CD4-positive, alpha-beta memory T cell (primary cell): ENCODE measurements at regions of chr16 and their contacts with region 1.

Region 1: GRCh38 chr16:78099372-78100161 is at the start of gene WWOX:
- DNase-seq: peak; percentile 96 to 98 (median 98)
- H3K4me3 ChIP-seq: peak within 1 kb of the TSS; percentile 78 to 88
- H3K4me3 Mint-ChIP-seq: peak within 1 kb of the TSS; percentile 89 to 96 (median 91)
- H3K27ac ChIP-seq: peak within 1 kb of the TSS; percentile 89
- H3K27ac Mint-ChIP-seq: peak within 1 kb of the TSS; percentile 93 to 98 (median 96)
- H3K4me1 ChIP-seq: peaks cover 16% of the 10 kb centered on the region
- H3K4me1 Mint-ChIP-seq: peaks cover 16 to 44% (median 25%) of the 10 kb centered on the region in 4 donors
- H3K27me3 ChIP-seq: no peaks in the 10 kb centered on the region
- H3K27me3 Mint-ChIP-seq: peaks cover 0 to 7% of the 10 kb centered on the region in 2 donors
- total RNA-seq, gene WWOX: 21.9 to 23.1 TPM

Region 2: DNA sequence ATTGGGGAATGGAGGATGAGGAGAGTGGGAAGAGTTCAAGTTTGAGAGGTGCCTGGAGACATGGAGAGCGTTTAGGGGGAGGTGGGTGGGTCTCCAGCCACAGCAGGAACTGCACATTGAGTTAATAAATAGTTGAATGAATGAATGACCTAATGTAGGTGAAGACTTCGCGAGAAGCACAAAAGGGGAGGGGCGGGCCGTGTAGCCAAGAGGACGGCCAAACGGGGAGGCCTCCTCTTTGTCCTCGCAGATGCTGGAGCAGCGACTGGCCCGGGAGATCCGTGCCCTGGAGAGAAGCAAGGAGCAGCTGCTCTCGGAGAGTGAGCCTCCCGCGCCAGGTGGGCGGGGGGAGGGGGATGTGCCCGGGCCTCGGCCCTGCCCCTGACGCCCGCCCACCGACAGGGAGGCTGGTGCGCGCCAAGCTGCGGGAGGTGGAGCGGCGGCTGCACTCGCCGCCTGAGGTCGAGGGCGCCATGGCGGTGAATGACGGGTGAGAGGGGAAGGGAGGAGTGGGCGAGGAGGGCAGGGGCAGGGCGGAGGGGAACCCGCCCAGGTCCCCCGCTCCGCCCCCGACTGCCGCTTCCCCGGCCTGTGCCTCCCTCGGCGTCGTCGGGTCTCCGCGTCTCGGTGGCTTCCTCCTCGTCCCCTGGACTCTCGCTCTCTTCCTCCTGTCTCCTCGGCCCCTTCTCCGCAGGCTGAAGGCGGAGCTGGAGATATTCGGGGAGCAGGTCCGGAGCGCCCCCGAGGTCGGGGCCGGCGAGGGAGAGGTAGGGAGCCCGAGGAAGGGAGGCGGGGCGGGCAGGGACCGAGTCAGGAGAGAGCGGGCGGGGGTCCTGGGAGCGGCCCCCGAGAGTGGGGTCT is 887.5 kb before region 1 on chr16:
- CTCF ChIA-PET with region 1: no interaction called
- POLR2A ChIA-PET with region 1: no interaction called
- intact Hi-C with region 1: loop called (anchors 1 kb)
- DNase-seq: peak; percentile 71 to 86 (median 74)
- H3K4me3 ChIP-seq: peak overlapping the region; percentile 17 to 66
- H3K4me3 Mint-ChIP-seq: peak overlapping the region; percentile 84 to 92 (median 88)
- H3K27ac ChIP-seq: peak overlapping the region; percentile 61
- H3K27ac Mint-ChIP-seq: peak overlapping the region; percentile 78 to 90 (median 88)
- H3K4me1 ChIP-seq: peaks cover 5% of the 10 kb centered on the region
- H3K4me1 Mint-ChIP-seq: peaks cover 8 to 16% (median 13%) of the 10 kb centered on the region in 4 donors
- H3K27me3 ChIP-seq: no peaks in the 10 kb centered on the region
- H3K27me3 Mint-ChIP-seq: no peaks in the 10 kb centered on the region

Region 3: GRCh38 chr16:77675464-77676324 is 423.9 kb before region 1 on chr16:
- CTCF ChIA-PET with region 1: interaction called, 5 read pairs
- POLR2A ChIA-PET with region 1: no interaction called
- intact Hi-C with region 1: loop called (anchors 1 kb)
- DNase-seq: peak; percentile 48 to 62 (median 60)
- H3K4me3 ChIP-seq: no peak overlapping the region
- H3K4me3 Mint-ChIP-seq: no peak overlapping the region
- H3K27ac ChIP-seq: no peak overlapping the region
- H3K27ac Mint-ChIP-seq: no peak overlapping the region
- H3K4me1 ChIP-seq: no peaks in the 10 kb centered on the region
- H3K4me1 Mint-ChIP-seq: no peaks in the 10 kb centered on the region
- H3K27me3 ChIP-seq: no peaks in the 10 kb centered on the region
- H3K27me3 Mint-ChIP-seq: peaks cover 2 to 5% of the 10 kb centered on the region in 2 donors

Region 4: DNA sequence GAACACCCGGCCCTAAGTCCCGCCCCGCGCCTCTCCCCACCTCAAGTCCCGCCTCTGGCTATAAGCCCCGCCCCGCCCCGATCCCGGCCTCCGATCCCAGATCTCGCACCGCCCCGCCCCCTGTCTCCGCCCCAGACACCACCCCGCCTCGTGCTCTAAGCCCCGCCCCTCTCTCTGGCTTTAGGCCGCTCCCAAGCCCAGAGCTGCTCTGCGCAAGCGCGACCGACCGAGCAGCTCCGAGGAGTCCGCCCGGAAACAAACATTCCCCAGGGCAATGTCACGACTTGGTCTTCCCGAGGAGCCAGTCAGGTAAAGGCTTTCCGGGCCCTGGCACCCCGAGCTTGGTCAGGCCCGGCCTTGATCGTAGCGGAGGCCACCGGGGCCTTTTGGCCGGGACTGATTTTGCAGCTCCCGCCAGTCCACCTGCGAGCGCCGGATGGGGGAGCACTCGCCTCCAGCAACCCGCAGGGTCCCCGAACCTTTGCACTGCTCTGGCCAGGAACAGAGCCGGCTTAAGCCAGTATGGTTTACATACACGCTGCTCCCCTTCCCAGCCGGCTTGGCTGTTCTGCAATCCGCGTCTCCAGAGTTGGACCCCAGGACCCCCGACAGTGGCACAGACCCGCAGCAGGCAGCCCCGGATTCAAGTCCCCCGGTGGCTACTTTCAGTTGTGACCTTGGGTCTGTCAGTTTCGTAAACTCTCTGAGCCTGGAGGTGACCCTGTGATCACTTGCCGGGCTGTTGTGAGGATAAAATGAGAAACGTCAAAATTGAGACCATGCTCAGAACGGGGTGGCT is 377.1 kb before region 1 on chr16 and contains the start of gene NUDT7:
- CTCF ChIA-PET with region 1: interaction called, 6 read pairs
- POLR2A ChIA-PET with region 1: interaction called, 4 read pairs
- intact Hi-C with region 1: loop called (anchors 1 kb)
- DNase-seq: peak; percentile 87 to 91 (median 89)
- H3K4me3 ChIP-seq: peak within 1 kb of the TSS; percentile 55 to 77
- H3K4me3 Mint-ChIP-seq: peak within 1 kb of the TSS; percentile 86 to 94 (median 90)
- H3K27ac ChIP-seq: peak within 1 kb of the TSS; percentile 54
- H3K27ac Mint-ChIP-seq: peak within 1 kb of the TSS; percentile 51 to 94 (median 87)
- H3K4me1 ChIP-seq: peaks cover 12% of the 10 kb centered on the region
- H3K4me1 Mint-ChIP-seq: peaks cover 9 to 17% (median 12%) of the 10 kb centered on the region in 4 donors
- H3K27me3 ChIP-seq: no peaks in the 10 kb centered on the region
- H3K27me3 Mint-ChIP-seq: peaks cover 0 to 2% of the 10 kb centered on the region in 2 donors
- total RNA-seq, gene NUDT7: 9.8 to 11.0 TPM